Posterior vena cava (tissue), 2 donors: ENCODE measurements at regions of chr4 and their contacts with region 1.

Region 1: DNA sequence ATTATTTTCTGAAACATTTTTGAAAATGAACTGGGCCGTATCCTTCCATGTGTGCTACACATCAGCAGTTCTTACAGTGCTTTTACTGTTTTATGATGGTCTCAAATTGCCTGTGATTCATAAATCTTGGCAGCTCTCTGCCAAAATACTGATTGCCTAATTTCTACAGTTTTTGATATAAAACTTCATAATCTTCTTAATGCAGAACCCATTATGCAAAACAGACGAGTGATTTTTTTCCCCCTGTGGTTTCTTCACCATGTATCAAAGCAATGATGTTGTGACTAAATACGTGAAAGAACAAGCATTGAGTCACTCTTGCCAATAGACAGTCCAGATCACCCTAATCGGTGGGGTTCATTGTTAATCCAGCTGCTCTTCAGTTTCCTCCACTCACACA is 156.4 kb upstream of the WDR1 start:
- DNase-seq: no peak

Region 2: GRCh38 chr4:10130178-10130888 is 142.7 kb before region 1 on chr4:
- intact Hi-C with region 1: no loop called
- DNase-seq: no peak

Region 3: GRCh38 chr4:11976726-11977263 is 1703.8 kb after region 1 on chr4:
- intact Hi-C with region 1: loop called in 1 of 2 experiments (anchors 5 kb)
- DNase-seq: no peak